Testis (tissue), 5 donors: ENCODE measurements at regions of chr10 and their contacts with region 1.

Region 1: GRCh38 chr10:27558612-27559020 is 54.5 kb downstream of the RAB18 start:
- DNase-seq: peak; percentile 70
- H3K4me3 ChIP-seq: no peak overlapping the region
- H3K27ac ChIP-seq: no peak overlapping the region
- H3K4me1 ChIP-seq: no peaks in the 10 kb centered on the region
- H3K27me3 ChIP-seq: no peaks in the 10 kb centered on the region
- CTCF ChIP-seq: peak; percentile 22 to 70 (median 58)
- POLR2A ChIP-seq: no peak

Region 2: DNA sequence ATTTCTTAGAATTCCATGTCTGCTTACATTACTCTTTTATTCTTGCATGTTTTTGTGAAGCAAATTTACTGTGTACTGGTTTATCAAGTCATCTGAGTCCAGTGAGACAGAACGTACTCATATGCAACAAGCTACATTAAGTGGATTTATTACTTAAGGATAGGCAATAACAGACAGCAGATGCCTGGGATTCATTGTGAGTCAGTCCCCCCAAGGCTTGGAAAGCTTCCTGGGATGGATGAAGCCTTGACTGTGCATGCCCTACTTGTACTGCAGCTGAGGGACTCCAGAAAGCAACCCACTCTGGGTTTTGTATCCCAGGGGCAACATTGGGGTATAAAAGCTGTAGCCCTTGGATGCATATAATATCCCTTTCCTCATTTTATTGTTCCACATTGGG is 167.9 kb before region 1 on chr10:
- intact Hi-C with region 1: no loop called
- DNase-seq: no peak
- H3K4me3 ChIP-seq: no peak overlapping the region
- H3K27ac ChIP-seq: no peak overlapping the region
- H3K4me1 ChIP-seq: no peaks in the 10 kb centered on the region
- H3K27me3 ChIP-seq: no peaks in the 10 kb centered on the region
- CTCF ChIP-seq: no peak
- POLR2A ChIP-seq: no peak

Region 3: GRCh38 chr10:27658788-27659187 is 100.2 kb after region 1 on chr10:
- intact Hi-C with region 1: loop called (anchors 10 kb)
- DNase-seq: no peak
- H3K4me3 ChIP-seq: no peak overlapping the region
- H3K27ac ChIP-seq: no peak overlapping the region
- H3K4me1 ChIP-seq: no peaks in the 10 kb centered on the region
- H3K27me3 ChIP-seq: no peaks in the 10 kb centered on the region
- CTCF ChIP-seq: no peak
- POLR2A ChIP-seq: no peak

Region 4: DNA sequence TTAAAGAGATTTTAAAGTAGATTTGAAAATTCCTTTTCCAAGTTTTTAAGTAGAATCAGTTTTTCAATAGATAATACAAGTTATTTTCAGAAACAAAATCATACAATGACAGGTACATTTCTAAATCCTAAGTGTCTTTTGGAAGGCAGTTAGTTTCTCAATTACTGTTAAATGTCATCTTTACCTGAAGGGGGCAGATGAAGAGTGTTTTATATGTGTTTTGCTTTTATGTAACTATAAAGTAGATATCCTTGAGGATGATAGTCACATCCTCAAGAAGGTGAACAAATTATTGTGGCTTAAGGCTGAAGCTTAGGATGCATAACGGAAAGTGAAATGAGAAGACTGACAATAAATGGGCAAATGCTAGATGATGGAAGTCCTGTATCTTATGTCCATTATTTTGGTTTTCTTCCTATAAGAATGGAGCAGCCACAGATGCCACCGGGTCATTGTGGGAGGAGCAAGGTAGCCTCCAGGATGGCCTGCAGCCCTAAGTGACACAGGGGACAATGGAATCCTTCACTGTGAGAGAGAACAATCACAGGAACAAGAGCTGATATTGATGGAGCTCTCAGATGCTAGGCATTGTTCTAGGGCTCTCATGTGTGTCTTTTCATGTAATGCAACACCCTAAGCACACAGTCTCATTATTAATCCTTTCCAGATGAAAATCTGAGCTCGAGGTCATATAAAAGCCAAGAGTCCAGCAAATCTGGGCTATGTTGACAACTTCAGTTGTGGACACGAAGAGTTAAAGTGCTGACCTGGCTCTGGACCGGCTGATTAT is 201.1 kb after region 1 on chr10:
- intact Hi-C with region 1: no loop called
- DNase-seq: no peak
- H3K4me3 ChIP-seq: no peak overlapping the region
- H3K27ac ChIP-seq: no peak overlapping the region
- H3K4me1 ChIP-seq: no peaks in the 10 kb centered on the region
- H3K27me3 ChIP-seq: no peaks in the 10 kb centered on the region
- CTCF ChIP-seq: no peak
- POLR2A ChIP-seq: no peak

Region 5: GRCh38 chr10:27805180-27805579 is 246.6 kb after region 1 on chr10:
- intact Hi-C with region 1: no loop called
- DNase-seq: no peak
- H3K4me3 ChIP-seq: no peak overlapping the region
- H3K27ac ChIP-seq: no peak overlapping the region
- H3K4me1 ChIP-seq: no peaks in the 10 kb centered on the region
- H3K27me3 ChIP-seq: no peaks in the 10 kb centered on the region
- CTCF ChIP-seq: no peak
- POLR2A ChIP-seq: no peak